Spleen (tissue), 13 donors: ENCODE measurements at regions of chr11 and their contacts with region 1.

Region 1: DNA sequence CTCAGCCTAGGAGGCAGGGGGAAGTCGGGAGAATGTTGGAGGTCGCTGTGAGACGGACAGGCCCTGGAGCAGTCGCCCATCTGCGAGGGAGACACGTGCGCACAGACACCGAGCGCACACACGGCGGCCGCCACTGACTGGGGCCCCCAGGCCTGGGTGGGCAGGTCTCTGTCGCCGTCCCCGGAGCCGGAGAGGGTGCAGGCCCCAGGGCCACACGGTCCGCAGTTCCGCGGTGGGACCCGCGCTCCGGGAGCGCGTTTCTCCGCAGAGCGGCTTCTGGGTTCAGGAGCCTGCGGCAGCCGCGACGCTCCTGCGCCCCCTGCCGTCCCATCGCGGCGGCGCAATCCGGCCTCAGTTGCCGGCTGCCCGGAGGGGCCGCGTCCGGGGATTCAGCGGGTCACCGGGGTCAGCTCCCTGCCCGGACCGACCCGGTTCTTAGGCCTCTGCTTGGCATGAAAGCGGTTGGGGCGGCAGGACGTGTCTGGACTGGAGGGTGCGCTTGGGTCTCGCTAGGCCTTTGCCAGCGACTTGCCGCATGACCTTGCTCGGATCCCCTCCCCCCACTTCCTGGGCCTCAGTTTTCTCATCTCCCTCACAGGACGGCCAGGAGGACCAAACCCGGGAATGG is 31.2 kb downstream of the PDE2A start:
- DNase-seq: peak; percentile 89
- H3K4me3 ChIP-seq: peak overlapping the region; percentile 52 to 82 (median 60)
- H3K27ac ChIP-seq: peak overlapping the region in 6 of 8 donors; percentile 13 to 85 (median 52)
- H3K4me1 ChIP-seq: peaks cover 3 to 38% (median 23%) of the 10 kb centered on the region in 6 donors
- H3K27me3 ChIP-seq: peaks cover 0 to 52% (median 17%) of the 10 kb centered on the region in 7 donors
- CTCF ChIP-seq: peak; percentile 86 to 99 (median 96)
- POLR2A ChIP-seq: no peak

Region 2: GRCh38 chr11:72483412-72484186 is 159.4 kb before region 1 on chr11:
- intact Hi-C with region 1: loop called (anchors 2 kb)
- DNase-seq: no peak
- H3K4me3 ChIP-seq: peak overlapping the region in 1 of 8 donors; percentile 5
- H3K27ac ChIP-seq: peak overlapping the region; percentile 15 to 83 (median 66)
- H3K4me1 ChIP-seq: peaks cover 9 to 26% (median 18%) of the 10 kb centered on the region in 6 donors
- H3K27me3 ChIP-seq: no peaks in the 10 kb centered on the region
- CTCF ChIP-seq: no peak
- POLR2A ChIP-seq: no peak

Region 3: DNA sequence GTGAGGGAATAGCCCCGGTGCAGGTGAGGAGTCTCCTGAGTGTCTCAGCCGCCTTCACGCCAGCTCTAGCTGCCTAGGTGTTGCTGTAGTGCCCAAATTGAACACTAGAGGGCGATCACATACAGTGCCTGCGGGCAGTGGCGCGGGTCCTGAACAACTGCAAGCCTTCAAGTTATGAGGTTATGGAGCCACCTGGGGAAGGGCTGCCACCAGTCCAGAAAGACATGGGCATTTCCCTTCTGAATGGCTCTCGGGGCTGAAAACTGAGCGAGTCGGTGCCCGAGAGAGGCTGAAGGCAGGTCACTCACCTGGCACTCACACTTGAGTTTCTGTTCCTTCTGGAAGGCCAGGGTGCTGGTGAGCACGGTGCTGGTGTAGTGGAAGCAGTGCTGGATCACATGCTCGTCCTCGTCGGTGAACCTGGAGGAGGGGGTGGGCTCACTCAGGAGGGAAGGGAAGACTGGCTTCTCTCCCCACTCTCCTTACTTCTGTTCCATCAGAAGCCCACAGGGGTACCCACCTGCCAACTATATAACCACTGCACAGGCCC is 57.2 kb before region 1 on chr11:
- intact Hi-C with region 1: loop called (anchors 5 kb)
- DNase-seq: peak; percentile 87
- H3K4me3 ChIP-seq: peak overlapping the region in 2 of 8 donors; percentile 31 to 66
- H3K27ac ChIP-seq: peak overlapping the region in 3 of 8 donors; percentile 10 to 49 (median 48)
- H3K4me1 ChIP-seq: peaks cover 20 to 69% (median 38%) of the 10 kb centered on the region in 6 donors
- H3K27me3 ChIP-seq: peaks cover 0 to 52% (median 15%) of the 10 kb centered on the region in 7 donors
- CTCF ChIP-seq: peak; percentile 86 to 98 (median 95)
- POLR2A ChIP-seq: no peak

Region 4: GRCh38 chr11:73019449-73019848 is 376.5 kb after region 1 on chr11:
- intact Hi-C with region 1: no loop called
- DNase-seq: no peak
- H3K4me3 ChIP-seq: no peak overlapping the region
- H3K27ac ChIP-seq: no peak overlapping the region
- H3K4me1 ChIP-seq: peaks cover 0 to 43% (median 20%) of the 10 kb centered on the region in 6 donors
- H3K27me3 ChIP-seq: no peaks in the 10 kb centered on the region
- CTCF ChIP-seq: no peak
- POLR2A ChIP-seq: no peak